ENCODE measurements at regions of chrX and their contacts with region 1.

Region 1: GRCh38 chrX:13005661-13006473 is 31.0 kb downstream of the TMSB4X start:
- H3K4me3 Mint-ChIP-seq: peak overlapping the region; percentile 72
- H3K27ac Mint-ChIP-seq: peak overlapping the region; percentile 97
- H3K4me1 Mint-ChIP-seq: peaks cover 27% of the 10 kb centered on the region
- H3K27me3 Mint-ChIP-seq: no peaks in the 10 kb centered on the region

Region 2: GRCh38 chrX:12946838-12947544 is 58.9 kb before region 1 on chrX:
- intact Hi-C with region 1: loop called (anchors 5 kb)
- H3K4me3 Mint-ChIP-seq: peak overlapping the region; percentile 9
- H3K27ac Mint-ChIP-seq: peak overlapping the region; percentile 50
- H3K4me1 Mint-ChIP-seq: peaks cover 62% of the 10 kb centered on the region
- H3K27me3 Mint-ChIP-seq: no peaks in the 10 kb centered on the region

Region 3: GRCh38 chrX:13051529-13052172 is 45.8 kb after region 1 on chrX:
- intact Hi-C with region 1: loop called (anchors 5 kb)
- H3K4me3 Mint-ChIP-seq: no peak overlapping the region
- H3K27ac Mint-ChIP-seq: peak overlapping the region; percentile 71
- H3K4me1 Mint-ChIP-seq: peaks cover 41% of the 10 kb centered on the region
- H3K27me3 Mint-ChIP-seq: no peaks in the 10 kb centered on the region

Region 4: GRCh38 chrX:13087322-13088155 is 81.7 kb after region 1 on chrX:
- intact Hi-C with region 1: loop called (anchors 10 kb)
- H3K4me3 Mint-ChIP-seq: no peak overlapping the region
- H3K27ac Mint-ChIP-seq: peak overlapping the region; percentile 77
- H3K4me1 Mint-ChIP-seq: peaks cover 44% of the 10 kb centered on the region
- H3K27me3 Mint-ChIP-seq: no peaks in the 10 kb centered on the region